Posterior vena cava (tissue), 2 donors: ENCODE measurements at regions of chr22 and their contacts with region 1.

Region 1: GRCh38 chr22:29772170-29772641 is 5.0 kb downstream of the UQCR10 start:
- DNase-seq: no peak

Region 2: DNA sequence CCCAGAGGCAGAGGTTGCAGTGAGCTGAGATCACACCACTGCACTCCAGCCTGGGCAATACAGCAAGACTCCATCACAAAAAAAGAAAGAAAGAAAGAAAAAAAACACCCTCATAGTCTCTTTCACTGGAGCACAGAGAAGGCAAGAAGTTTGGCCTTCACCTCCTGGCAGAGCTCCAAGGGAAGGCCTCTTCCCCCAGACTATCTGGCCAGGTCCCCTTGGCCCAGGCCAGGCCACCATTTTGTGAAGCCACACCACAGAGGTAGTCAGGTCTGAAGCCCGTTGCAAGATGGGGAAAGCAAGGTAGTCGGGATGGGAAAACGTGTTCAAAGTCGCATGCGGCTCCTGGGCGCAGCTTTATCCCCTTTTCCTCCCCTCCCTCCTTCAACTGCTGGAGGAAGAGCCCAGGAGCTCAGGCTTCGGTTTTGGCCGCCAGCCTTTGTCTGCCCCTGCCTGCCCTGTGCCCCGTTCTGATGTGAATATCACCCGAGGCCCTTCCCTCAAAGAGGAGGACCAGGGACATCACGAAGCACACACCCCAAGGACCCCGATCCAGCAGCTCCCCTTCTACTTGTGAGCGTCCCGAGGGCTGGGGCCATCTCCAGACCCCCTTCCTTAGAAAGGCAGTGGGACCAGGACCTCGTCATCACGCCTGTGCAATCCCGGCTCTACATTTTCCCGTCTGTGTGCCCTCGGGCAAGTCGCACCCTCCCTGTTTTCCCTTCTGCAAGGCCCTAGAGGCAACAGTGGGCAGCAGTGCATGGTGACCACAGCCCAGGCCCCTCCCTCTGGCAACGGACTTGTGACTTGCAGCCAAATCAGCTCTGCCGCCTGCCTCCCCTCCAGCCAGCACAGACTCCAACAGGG is 34.7 kb before region 1 on chr22:
- intact Hi-C with region 1: loop called in 1 of 2 experiments (anchors 1 kb)
- DNase-seq: no peak

Region 3: DNA sequence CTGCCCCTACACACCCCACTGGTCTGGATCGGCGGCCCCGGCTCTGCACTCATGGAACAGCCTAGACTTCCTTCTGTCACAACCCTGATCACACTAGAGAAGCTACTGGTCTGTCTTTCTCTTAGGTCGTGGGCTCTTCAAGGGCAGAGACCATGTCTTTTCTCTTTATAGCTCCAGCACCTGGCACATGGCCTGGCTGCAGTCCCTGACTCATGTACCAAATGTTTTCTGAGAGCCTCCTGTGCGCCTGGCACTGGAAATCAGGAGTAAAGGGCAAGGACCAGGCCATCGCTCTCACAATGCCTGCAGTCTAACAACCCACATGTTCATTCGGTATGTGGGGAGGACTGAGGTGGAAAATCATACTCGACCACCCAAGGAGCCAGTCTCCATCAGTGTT is 58.4 kb after region 1 on chr22:
- intact Hi-C with region 1: no loop called
- DNase-seq: no peak

Region 4: GRCh38 chr22:30314915-30315314 is 542.7 kb after region 1 on chr22:
- intact Hi-C with region 1: no loop called
- DNase-seq: no peak